ENCODE measurements at regions of chr12 and their contacts with region 1.

Region 1: DNA sequence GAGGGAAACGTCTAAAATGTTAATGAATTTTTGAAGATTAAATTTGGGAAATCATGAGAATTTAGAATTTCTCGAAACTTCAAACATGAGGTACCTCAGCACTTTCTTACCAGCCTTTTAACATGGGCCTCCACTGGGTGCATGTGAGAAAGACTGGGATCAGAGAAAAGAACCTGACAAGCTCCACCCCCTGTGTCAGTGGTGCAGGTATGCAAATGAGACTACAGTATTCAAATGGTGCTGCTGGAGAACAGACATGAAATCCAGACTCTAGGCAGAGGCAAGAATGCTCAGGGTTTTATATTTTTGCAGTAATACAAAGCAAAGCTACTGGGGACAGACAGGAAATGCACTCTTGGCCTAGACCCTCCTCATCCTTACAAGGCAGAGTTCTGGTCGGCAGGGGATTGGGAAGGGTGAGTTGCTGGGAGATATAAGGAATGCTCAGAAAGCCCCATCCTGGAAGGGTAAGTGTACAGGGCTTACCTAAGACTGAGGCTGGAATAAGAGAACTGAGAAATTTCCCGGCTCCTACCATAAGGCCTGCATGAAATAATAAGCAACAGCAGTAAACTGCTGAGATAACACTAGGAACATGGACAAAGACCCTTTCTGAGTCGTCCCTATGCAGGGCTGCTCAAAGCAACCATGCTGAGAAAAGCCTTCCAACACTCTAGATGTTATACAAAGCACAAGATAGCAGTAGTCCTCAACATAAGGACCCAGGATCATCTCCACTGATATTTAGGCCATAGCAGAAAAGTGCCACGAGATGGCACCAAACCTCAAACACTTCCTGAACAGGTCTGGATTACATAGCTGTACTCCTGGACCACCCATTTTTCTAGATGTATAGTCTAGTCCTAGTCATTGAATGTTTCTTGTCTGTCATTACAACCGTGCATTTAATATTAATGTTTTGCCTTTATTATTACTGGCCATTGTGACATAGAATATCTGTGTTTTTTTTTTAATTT is 260.8 kb downstream of the RASSF9 start:
- DNase-seq: peak; percentile 55
- H3K4me3 ChIP-seq: no peak overlapping the region
- H3K27ac ChIP-seq: no peak overlapping the region
- H3K4me1 ChIP-seq: no peaks in the 10 kb centered on the region
- CTCF ChIP-seq: peak; percentile 84

Region 2: DNA sequence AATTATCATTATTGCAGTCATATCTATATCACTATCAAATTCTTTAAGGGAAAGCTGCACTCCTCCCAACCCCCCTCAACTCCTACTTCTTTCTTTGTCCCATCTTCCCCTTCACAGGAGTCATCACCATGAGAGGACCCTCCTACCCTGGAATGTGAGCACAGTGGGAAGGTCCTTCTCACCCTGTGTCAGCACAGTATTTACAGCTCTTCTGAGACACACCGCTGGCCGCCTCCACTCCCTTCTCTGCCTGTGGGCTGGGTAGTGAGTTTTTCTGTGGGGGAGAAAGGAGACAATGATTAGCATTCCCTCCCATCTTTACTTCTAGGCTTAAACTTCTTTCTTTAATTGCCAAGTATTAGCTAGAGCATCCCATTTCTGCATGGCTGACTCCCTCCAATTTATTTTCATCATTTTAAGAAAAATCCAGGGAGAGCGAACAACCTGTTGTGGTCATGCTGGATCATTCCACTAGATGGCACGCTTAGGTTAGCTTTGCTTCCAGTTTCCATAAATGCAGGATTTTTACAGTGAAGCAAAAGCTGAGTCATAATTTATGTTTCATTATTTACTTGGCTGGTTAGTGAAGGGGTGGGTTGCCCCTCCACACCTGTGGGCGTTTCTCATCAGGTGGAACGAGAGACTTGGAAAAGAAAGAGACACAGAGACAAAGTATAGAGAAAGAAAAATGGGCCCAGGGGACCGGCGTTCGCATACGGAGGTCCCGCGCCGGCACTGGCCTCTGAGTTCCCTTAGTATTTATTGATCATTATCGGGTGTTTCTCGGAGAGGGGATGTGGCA is 106.9 kb before region 1 on chr12:
- CTCF ChIA-PET with region 1: no interaction called
- POLR2A ChIA-PET with region 1: no interaction called
- intact Hi-C with region 1: loop called (anchors 10 kb)
- DNase-seq: peak; percentile 50
- H3K4me3 ChIP-seq: no peak overlapping the region
- H3K27ac ChIP-seq: no peak overlapping the region
- H3K4me1 ChIP-seq: peaks cover 8% of the 10 kb centered on the region
- CTCF ChIP-seq: peak; percentile 80

Region 3: GRCh38 chr12:85866986-85867776 is 291.8 kb after region 1 on chr12:
- CTCF ChIA-PET with region 1: no interaction called
- POLR2A ChIA-PET with region 1: interaction called, 4 read pairs
- intact Hi-C with region 1: loop called (anchors 2 kb)
- DNase-seq: peak; percentile 35
- H3K4me3 ChIP-seq: no peak overlapping the region
- H3K27ac ChIP-seq: no peak overlapping the region
- H3K4me1 ChIP-seq: no peaks in the 10 kb centered on the region
- CTCF ChIP-seq: peak; percentile 83

Region 4: DNA sequence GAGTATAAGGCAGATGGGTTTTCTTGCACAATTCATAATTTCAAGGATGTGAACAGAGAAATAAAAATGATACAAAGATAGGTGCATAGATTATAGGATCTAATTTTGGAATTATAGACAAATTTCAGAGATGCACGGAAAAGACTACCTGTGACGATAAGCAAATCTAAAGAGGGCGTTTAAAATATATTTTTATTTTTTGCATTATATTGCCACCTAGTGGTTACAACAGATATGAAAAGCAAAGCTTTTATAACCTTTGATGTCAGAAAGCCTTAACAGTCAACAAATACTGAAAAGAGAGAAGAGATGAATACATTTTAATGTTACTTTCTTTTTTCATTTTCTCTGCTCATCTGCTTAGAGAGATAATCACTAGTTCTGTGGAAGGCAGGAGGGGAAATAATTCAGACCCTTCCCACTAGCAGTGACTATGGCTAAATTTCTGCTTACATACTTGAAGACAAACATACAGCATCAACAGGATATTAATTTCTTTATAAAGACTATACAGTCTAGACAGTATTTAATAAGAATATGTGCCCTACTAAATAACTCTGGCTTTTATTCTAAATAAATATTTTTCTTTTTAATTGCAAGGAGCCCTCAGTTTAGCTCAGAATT is 345.0 kb after region 1 on chr12:
- CTCF ChIA-PET with region 1: no interaction called
- POLR2A ChIA-PET with region 1: no interaction called
- intact Hi-C with region 1: loop called (anchors 5 kb)
- DNase-seq: peak; percentile 49
- H3K4me3 ChIP-seq: no peak overlapping the region
- H3K27ac ChIP-seq: no peak overlapping the region
- H3K4me1 ChIP-seq: no peaks in the 10 kb centered on the region
- CTCF ChIP-seq: peak; percentile 85

Measured in OCI-LY7 (cell line).